Endothelial cell of umbilical vein (primary cell): ENCODE measurements at regions of chr20 and their contacts with region 1.

Region 1: GRCh38 chr20:43537921-43538877 is 20.6 kb upstream of the SGK2 start:
- DNase-seq: peak; percentile 59
- H3K4me3 ChIP-seq: no peak overlapping the region
- H3K27ac ChIP-seq: no peak overlapping the region
- H3K4me1 ChIP-seq: no peaks in the 10 kb centered on the region
- H3K27me3 ChIP-seq: no peaks in the 10 kb centered on the region
- CTCF ChIP-seq: peak; percentile 82 to 85
- POLR2A ChIP-seq: no peak

Region 2: GRCh38 chr20:43514062-43514999 is 23.9 kb before region 1 on chr20:
- CTCF ChIA-PET with region 1: interaction called, 10 read pairs
- POLR2A ChIA-PET with region 1: no interaction called
- dilution Hi-C with region 1: no loop called
- intact Hi-C with region 1: no loop called
- DNase-seq: peak; percentile 98
- H3K4me3 ChIP-seq: peak overlapping the region; percentile 45 to 71 (median 46)
- H3K27ac ChIP-seq: peak overlapping the region; percentile 12
- H3K4me1 ChIP-seq: no peaks in the 10 kb centered on the region
- H3K27me3 ChIP-seq: no peaks in the 10 kb centered on the region
- CTCF ChIP-seq: peak; percentile 15 to 55
- POLR2A ChIP-seq: no peak

Region 3: DNA sequence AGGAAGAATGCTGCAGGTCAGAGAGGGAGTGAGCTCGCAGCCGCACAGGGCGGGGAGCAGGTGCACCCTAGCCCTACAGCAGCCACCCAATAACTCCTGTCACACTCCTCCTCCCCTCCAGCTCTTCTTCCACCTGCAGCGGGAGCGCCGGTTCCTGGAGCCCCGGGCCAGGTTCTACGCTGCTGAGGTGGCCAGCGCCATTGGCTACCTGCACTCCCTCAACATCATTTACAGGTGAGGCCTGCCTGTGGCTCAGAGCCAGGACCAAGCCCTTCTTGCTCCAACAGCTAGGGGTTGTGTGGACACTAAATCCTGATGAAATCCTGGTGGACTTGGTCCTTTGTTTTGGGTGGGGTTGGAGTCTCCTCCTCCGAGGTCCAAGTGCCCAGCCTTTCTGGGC is 32.3 kb after region 1 on chr20:
- CTCF ChIA-PET with region 1: interaction called, 12 read pairs
- POLR2A ChIA-PET with region 1: no interaction called
- dilution Hi-C with region 1: no loop called
- intact Hi-C with region 1: no loop called
- DNase-seq: no peak
- H3K4me3 ChIP-seq: no peak overlapping the region
- H3K27ac ChIP-seq: no peak overlapping the region
- H3K4me1 ChIP-seq: no peaks in the 10 kb centered on the region
- H3K27me3 ChIP-seq: no peaks in the 10 kb centered on the region
- CTCF ChIP-seq: no peak
- POLR2A ChIP-seq: no peak

Region 4: DNA sequence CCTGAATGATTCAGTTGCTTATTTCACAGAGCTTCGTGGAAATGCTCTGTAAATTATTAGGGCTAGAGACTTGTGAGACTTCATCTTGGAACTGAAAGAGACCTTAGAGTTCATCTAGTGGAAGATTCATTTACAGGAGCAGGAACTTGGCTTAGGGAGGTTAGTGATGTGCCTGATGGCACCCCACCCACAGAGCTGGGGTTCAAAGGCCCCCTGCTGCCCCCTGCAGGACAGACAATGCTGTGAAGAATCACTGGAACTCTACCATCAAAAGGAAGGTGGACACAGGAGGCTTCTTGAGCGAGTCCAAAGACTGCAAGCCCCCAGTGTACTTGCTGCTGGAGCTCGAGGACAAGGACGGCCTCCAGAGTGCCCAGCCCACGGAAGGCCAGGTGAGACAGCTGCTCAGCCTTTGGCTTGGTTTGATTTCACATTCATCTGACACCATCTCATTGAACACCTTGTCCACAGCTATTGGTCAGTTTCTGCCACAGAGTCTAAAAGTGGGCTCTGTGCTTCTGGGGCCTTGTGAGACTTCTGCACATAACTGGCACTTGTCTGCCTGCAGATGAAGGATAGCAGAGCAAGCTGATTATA is 153.8 kb after region 1 on chr20:
- CTCF ChIA-PET with region 1: interaction called, 143 read pairs
- POLR2A ChIA-PET with region 1: no interaction called
- dilution Hi-C with region 1: no loop called
- intact Hi-C with region 1: loop called (anchors 1 kb)
- DNase-seq: peak; percentile 37
- H3K4me3 ChIP-seq: no peak overlapping the region
- H3K27ac ChIP-seq: no peak overlapping the region
- H3K4me1 ChIP-seq: no peaks in the 10 kb centered on the region
- H3K27me3 ChIP-seq: no peaks in the 10 kb centered on the region
- CTCF ChIP-seq: peak; percentile 64 to 68
- POLR2A ChIP-seq: no peak

Region 5: GRCh38 chr20:44080646-44081267 is 542.6 kb after region 1 on chr20:
- CTCF ChIA-PET with region 1: interaction called, 50 read pairs
- POLR2A ChIA-PET with region 1: no interaction called
- dilution Hi-C with region 1: no loop called
- intact Hi-C with region 1: loop called (anchors 1 kb)
- DNase-seq: peak; percentile 79
- H3K4me3 ChIP-seq: no peak overlapping the region
- H3K27ac ChIP-seq: no peak overlapping the region
- H3K4me1 ChIP-seq: no peaks in the 10 kb centered on the region
- H3K27me3 ChIP-seq: no peaks in the 10 kb centered on the region
- CTCF ChIP-seq: peak; percentile 81 to 98
- POLR2A ChIP-seq: no peak